ENCODE measurements at regions of chr9 and their contacts with region 1.

Region 1: DNA sequence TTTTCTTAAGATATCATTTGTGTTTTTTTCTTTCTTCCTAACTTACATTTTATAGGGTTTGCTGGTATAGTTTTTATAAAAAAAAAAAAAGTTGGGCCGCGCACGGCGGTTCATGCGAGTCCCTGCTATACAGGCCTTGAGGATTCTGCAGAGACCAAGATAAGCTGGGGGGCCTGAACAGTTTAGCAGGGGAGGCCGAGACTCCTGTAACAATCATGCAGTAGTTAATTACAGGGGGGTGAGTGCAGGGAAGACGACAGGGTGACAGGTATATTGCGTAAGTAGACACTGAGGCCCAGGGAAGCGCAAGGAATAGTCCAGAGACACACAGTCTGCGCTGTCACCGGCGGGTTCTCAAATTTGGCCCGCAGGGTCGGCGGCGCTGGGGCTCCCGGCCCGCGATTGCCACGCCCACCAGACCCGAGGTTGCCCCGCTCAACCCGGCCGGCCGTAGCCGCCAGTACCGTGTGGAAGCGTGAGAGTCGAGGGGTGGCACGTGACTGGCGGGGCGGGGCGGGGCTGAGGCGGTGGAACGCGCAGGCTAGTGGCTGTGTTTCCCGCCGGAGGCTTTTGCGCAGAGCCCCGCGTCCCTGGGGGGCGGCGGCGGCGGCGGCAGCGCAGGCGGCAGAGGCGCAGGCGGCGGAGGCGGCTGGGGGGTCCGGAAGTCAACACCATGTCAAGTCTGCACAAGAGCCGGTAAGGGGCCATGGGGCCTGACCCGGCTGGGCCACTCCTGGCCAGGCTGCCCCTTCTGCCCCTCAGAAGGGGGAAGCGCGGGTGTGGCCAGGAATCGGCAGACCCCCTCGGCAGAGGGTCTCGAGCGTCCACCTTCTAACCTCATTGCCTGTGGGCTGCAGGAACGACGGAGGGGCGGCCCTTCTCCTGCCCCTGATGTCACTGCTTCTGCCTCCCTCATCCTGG is at the start of gene TBC1D13:
- DNase-seq: peak; percentile 92
- ATAC-seq: peak; percentile 98
- H3K4me3 Mint-ChIP-seq: peak within 1 kb of the TSS; percentile 90
- H3K27ac Mint-ChIP-seq: peak within 1 kb of the TSS; percentile 91
- H3K4me1 Mint-ChIP-seq: peaks cover 17% of the 10 kb centered on the region
- H3K27me3 Mint-ChIP-seq: no peaks in the 10 kb centered on the region
- total RNA-seq, gene TBC1D13: 21.5 to 22.2 TPM

Region 2: GRCh38 chr9:128771745-128772519 is 15.0 kb before region 1 on chr9 and contains the start of gene ZER1:
- CTCF ChIA-PET with region 1: interaction called, 10 read pairs
- DNase-seq: peak; percentile 94
- ATAC-seq: peak; percentile 95
- H3K4me3 Mint-ChIP-seq: peak within 1 kb of the TSS; percentile 95
- H3K27ac Mint-ChIP-seq: peak within 1 kb of the TSS; percentile 96
- H3K4me1 Mint-ChIP-seq: peaks cover 19% of the 10 kb centered on the region
- H3K27me3 Mint-ChIP-seq: no peaks in the 10 kb centered on the region
- total RNA-seq, gene ZER1: 17.7 to 18.2 TPM

Measured in activated CD8-positive, alpha-beta memory T cell treated with anti-CD3 and anti-CD28 coated beads, Interleukin-2, amount 10 ng/mL, durations not matched to agents 7 days and 5 days (primary cell).